ENCODE measurements at regions of chr1 and their contacts with region 1.

Region 1: GRCh38 chr1:171644805-171645483 is 7.5 kb downstream of the MYOC start:
- DNase-seq: peak; percentile 93
- H3K4me3 ChIP-seq: no peak overlapping the region
- H3K27ac ChIP-seq: peak overlapping the region; percentile 72 to 83 (median 80)
- H3K4me1 ChIP-seq: peaks cover 0 to 21% (median 20%) of the 10 kb centered on the region in 4 donors
- H3K27me3 ChIP-seq: no peaks in the 10 kb centered on the region
- CTCF ChIP-seq: peak; percentile 63 to 89 (median 84)
- EP300 ChIP-seq: no peak
- POLR2A ChIP-seq: no peak

Region 2: DNA sequence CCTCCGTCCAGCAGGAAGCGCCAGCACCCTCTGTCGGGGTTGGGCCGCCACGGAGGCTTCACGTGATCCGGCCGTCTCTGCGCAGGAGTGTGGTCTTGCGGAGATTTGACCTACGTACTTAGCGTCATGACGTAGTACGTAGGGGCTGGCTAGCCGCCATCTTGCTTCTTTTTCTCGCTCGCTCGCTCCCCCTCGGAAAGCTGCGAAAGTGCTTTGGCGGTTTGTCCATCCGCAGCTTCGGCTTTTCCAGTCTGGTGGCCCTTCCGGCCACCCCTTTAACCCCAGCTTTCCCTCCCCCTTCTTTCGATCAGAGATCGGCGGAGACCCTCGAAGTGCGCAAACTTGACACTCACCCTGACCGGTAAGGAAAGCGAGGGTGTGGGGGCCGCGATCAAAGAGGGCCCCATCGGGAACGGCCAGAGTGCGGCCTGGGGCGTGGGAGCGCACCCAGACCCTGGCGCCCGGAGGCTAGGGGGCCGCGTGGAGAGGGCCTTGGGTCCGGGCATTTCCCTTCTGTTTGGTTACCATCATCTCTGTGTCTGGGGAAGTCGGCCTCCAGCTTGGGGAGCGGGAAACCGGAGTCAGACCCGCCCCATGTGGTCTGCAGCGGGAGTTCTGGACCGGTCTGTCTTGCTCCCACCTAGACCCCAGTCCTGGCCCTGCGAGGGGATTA is 159.4 kb before region 1 on chr1 and contains the start of gene PRRC2C:
- intact Hi-C with region 1: loop called (anchors 10 kb)
- DNase-seq: peak; percentile 99
- H3K4me3 ChIP-seq: peak within 1 kb of the TSS; percentile 65 to 91 (median 88)
- H3K27ac ChIP-seq: peak within 1 kb of the TSS; percentile 98 to 99 (median 98)
- H3K4me1 ChIP-seq: peaks cover 0 to 38% (median 34%) of the 10 kb centered on the region in 4 donors
- H3K27me3 ChIP-seq: no peaks in the 10 kb centered on the region
- CTCF ChIP-seq: peak in 2 of 4 experiments; percentile 16 to 74
- EP300 ChIP-seq: peak in 1 of 4 donors; percentile 63
- POLR2A ChIP-seq: peak; percentile 59 to 60
- total RNA-seq, gene PRRC2C: 46.4 to 80.0 (median 53.1) TPM

Region 3: GRCh38 chr1:171715813-171716251 is 70.9 kb after region 1 on chr1:
- intact Hi-C with region 1: loop called (anchors 1 kb)
- DNase-seq: no peak
- H3K4me3 ChIP-seq: no peak overlapping the region
- H3K27ac ChIP-seq: peak overlapping the region in 3 of 4 donors; percentile 2 to 61 (median 59)
- H3K4me1 ChIP-seq: peaks cover 0 to 27% (median 16%) of the 10 kb centered on the region in 4 donors
- H3K27me3 ChIP-seq: no peaks in the 10 kb centered on the region
- CTCF ChIP-seq: peak; percentile 6 to 59 (median 48)
- EP300 ChIP-seq: no peak
- POLR2A ChIP-seq: no peak

Region 4: DNA sequence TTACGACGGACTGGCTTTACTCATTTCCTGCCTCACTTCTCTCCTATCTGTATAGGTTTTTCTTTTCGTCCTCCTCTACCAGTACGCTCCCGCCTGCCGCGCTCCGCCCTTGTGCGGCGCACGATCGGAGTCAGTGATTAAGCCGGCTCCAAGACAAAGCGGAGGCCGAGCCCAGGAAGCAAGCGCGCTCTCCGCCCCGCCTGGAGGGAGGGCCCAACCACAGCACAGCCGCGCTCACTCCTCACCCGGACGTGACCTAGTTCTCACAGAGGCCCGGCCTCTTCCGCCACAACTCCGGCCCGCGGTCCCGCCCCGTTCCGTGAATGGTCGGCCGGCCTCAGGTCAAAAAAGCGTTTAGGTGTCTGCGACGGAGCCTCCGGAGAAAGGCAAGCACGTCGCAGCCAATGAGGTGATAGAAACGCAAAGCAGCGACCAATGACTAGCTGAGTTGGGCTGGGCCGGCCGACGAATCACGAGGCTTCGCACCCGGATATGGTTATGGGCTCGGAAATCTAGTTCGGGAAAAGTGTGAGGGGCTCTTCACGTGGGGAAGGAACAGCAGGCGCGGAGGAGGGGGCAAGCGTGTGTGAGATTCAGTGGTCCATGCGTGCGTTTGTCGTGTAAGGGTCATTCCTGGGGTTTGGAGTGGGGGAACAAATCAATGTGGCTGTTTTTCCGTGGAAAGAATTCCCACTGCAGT is 136.4 kb after region 1 on chr1 and contains the start of gene METTL13:
- intact Hi-C with region 1: loop called (anchors 1 kb)
- DNase-seq: peak; percentile 99
- H3K4me3 ChIP-seq: peak within 1 kb of the TSS; percentile 56 to 84 (median 74)
- H3K27ac ChIP-seq: peak within 1 kb of the TSS; percentile 84 to 90 (median 89)
- H3K4me1 ChIP-seq: peaks cover 0 to 43% (median 33%) of the 10 kb centered on the region in 4 donors
- H3K27me3 ChIP-seq: no peaks in the 10 kb centered on the region
- CTCF ChIP-seq: no peak
- EP300 ChIP-seq: no peak
- POLR2A ChIP-seq: peak; percentile 94 to 95
- total RNA-seq, gene METTL13: 8.4 to 21.8 (median 17.0) TPM

Region 5: DNA sequence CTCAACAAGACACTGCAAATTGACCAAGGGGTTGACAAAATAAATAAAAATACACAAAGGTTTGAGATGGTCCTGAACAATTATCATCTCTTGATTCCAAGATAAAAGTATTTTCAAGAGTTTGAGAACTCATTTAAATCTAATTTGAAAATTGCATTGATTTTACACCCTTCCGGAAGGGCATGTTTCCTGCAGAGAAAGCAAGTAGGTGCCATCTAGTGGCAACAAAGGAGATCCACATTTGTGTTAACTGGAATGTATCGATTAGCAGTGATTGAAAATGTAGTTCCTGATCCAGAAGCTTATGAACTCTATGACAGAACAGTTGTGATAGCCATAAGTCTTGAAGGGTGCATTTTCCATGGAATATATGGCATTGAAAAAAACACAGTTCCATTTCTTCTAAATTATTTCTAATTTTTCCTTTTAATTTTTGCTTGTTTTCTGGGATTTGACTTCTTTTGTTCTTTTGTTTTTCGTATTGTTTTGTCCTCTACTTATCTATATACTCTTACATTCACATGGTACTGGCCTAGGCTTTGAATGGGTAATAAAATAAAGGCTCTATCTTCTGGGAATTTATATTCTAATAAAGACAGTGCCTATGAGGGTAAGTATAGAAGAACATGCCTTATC is 340.0 kb after region 1 on chr1:
- intact Hi-C with region 1: loop called (anchors 5 kb)
- DNase-seq: no peak
- H3K4me3 ChIP-seq: no peak overlapping the region
- H3K27ac ChIP-seq: no peak overlapping the region
- H3K4me1 ChIP-seq: peaks cover 0 to 3% (median 0%) of the 10 kb centered on the region in 4 donors
- H3K27me3 ChIP-seq: no peaks in the 10 kb centered on the region
- CTCF ChIP-seq: peak; percentile 54 to 71 (median 66)
- EP300 ChIP-seq: no peak
- POLR2A ChIP-seq: no peak

Measured in sigmoid colon (tissue), 7 donors.